BJ (cell line): ENCODE measurements at regions of chr14 and their contacts with region 1.

Region 1: DNA sequence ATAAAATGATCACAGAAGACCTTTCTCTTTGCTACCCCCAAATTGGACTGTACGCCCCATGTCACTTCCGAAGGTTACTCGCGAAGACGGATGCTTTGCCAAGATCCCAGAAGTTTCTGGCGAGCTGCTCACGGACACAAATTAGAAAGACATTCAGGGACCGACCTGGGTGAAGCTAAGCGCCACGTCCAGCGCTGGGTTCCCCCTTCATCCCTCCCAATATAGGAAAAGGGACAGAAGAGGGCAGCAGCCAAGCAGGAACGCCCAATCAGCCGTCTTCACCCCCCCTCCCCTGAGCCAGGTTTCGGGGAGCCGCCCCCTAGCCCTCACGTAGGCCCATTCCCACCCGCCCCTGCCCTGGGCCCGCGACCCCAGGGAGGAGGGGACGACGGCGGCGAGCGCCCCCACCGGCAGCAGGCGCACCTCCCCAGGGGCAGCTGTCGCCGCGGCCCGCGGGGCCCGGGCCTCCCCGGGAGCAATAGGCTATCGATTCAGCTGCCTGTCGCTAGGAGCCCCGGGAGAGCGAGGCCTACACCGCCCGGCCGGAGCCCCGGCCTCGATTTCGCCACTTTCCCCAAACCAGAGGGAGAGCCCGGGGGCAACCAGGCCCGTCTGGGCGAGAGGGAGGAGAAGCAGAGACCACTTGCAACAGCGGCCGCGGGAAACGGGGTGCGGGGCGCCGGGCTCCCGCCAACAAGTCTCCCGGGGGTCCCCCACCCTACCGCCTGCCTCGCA is 1.4 kb downstream of the DCAF5 start:
- DNase-seq: no peak
- H3K4me3 ChIP-seq: peak overlapping the region; percentile 81
- H3K27me3 ChIP-seq: no peaks in the 10 kb centered on the region
- CTCF ChIP-seq: peak; percentile 52; the same call in 1 of the 2 replicates

Region 2: GRCh38 chr14:69129264-69129880 is 22.1 kb before region 1 on chr14:
- CTCF ChIA-PET with region 1: interaction called, 19 read pairs
- POLR2A ChIA-PET with region 1: no interaction called
- DNase-seq: no peak
- H3K4me3 ChIP-seq: no peak overlapping the region
- H3K27me3 ChIP-seq: no peaks in the 10 kb centered on the region
- CTCF ChIP-seq: peak; percentile 95

Region 3: GRCh38 chr14:69193721-69194120 is 42.2 kb after region 1 on chr14:
- CTCF ChIA-PET with region 1: no interaction called
- POLR2A ChIA-PET with region 1: no interaction called
- DNase-seq: no peak
- H3K4me3 ChIP-seq: no peak overlapping the region
- H3K27me3 ChIP-seq: no peaks in the 10 kb centered on the region
- CTCF ChIP-seq: no peak

Region 4: DNA sequence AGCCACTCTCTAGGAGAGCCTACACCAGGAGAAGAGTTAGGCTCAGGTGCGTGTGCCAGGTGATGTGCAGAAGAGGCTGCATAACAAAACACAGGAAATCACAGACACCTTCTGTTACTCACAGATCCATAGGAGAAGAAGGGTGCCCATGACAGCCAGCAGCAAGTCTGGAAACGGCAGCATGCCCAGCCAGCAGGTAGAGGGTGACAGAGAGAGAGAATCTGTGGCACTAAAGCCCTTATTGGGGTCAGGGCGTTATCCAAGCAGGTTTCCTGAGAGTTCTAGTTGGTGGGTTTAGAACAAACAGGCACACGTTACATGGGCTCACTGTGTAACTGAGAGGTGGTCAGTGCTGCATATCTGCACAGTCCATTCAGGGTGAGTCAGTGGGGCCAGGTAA is 1052.2 kb after region 1 on chr14:
- CTCF ChIA-PET with region 1: no interaction called
- POLR2A ChIA-PET with region 1: no interaction called
- DNase-seq: no peak
- H3K4me3 ChIP-seq: no peak overlapping the region
- H3K27me3 ChIP-seq: peaks cover 1% of the 10 kb centered on the region; the same call in 1 of the 2 replicates
- CTCF ChIP-seq: no peak